Activated CD4-positive, alpha-beta memory T cell treated with anti-CD3 and anti-CD28 coated beads, Interleukin-2, amount 10 ng/mL, durations not matched to agents 7 days and 5 days (primary cell): ENCODE measurements at regions of chr1 and their contacts with region 1.

Region 1: GRCh38 chr1:25520446-25521061 is 22.9 kb upstream of the LDLRAP1 start:
- DNase-seq: peak; percentile 76
- H3K4me3 Mint-ChIP-seq: no peak overlapping the region
- H3K27ac Mint-ChIP-seq: no peak overlapping the region
- H3K4me1 Mint-ChIP-seq: peaks cover 6% of the 10 kb centered on the region
- H3K27me3 Mint-ChIP-seq: peaks cover 6% of the 10 kb centered on the region

Region 2: DNA sequence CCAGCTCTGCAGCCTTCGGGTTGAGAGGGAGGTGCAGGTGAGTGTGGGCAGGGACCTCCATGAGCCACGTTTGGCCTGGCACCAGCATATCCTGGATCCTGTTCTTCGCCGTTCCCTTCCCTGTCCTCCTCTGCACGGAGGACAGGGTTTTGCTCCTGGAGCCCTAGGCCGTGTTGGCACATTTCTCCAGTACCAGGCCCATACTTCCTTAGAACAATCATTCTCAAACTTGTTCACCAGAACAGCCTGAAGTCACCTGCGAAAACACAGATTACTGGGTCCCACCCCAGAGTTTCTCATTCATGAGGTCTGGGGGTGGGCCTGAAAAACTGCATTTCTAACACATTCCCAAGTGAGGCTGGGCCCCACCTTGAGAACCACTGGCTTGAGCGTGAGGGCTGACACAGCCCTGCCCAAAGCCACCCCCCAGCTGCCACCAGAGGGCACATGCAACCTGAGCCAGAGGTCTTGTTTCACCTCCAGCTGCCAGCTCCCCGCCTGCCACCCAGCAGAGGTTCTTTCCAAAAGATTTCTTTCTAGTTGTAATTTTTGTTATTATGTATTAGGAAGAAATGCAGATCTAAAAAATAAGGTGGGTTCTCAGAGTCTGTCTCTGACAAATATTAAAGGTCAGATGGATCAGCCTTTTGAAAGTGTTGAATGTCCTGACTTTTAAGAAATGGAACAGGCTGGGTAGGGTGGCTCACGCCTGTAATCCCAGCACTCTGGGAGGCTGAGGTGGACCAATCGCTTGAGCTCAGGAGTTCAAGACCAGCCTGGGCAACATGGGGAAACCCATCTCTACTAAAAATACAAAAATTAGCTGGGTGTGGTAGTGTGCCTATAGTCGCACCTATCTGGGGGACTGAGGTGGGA is 16.8 kb before region 1 on chr1:
- CTCF ChIA-PET with region 1: interaction called, 24 read pairs
- POLR2A ChIA-PET with region 1: no interaction called
- DNase-seq: peak; percentile 66
- H3K4me3 Mint-ChIP-seq: no peak overlapping the region
- H3K27ac Mint-ChIP-seq: no peak overlapping the region
- H3K4me1 Mint-ChIP-seq: peaks cover 12% of the 10 kb centered on the region
- H3K27me3 Mint-ChIP-seq: peaks cover 5% of the 10 kb centered on the region